MCF 10A (cell line): ENCODE measurements at regions of chr19 and their contacts with region 1.

Region 1: GRCh38 chr19:13774217-13775191 is at the start of gene C19orf53:
- DNase-seq: peak; percentile 94
- H3K4me3 Mint-ChIP-seq: peak within 1 kb of the TSS; percentile 98
- H3K27ac Mint-ChIP-seq: peak within 1 kb of the TSS; percentile 94
- H3K4me1 Mint-ChIP-seq: peaks cover 14% of the 10 kb centered on the region
- H3K27me3 Mint-ChIP-seq: no peaks in the 10 kb centered on the region
- CTCF ChIP-seq: no peak
- total RNA-seq, gene C19orf53: 89.0 and 101 TPM in 2 replicates

Region 2: DNA sequence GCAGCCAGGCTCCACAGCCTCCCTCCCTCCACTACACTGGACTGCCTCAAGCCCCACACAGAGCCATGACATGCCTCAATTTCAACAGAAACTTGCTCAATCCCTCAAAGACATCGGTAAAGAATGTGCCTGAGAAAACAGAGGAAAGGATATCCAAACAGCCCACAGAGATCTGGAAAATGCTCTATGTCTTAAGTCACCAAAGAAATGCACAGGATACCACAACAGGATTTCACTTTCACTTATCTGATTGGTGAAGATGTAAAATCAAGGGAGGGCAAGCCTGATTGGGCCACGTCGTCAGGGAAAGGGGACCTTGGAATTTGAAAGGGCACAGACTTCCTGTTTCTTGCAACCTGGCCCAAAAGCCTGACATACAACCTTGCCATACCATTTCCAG is 282.4 kb before region 1 on chr19:
- CTCF ChIA-PET with region 1: no interaction called
- POLR2A ChIA-PET with region 1: no interaction called
- intact Hi-C with region 1: no loop called
- DNase-seq: peak; percentile 2
- H3K4me3 Mint-ChIP-seq: no peak overlapping the region
- H3K27ac Mint-ChIP-seq: no peak overlapping the region
- H3K4me1 Mint-ChIP-seq: no peaks in the 10 kb centered on the region
- H3K27me3 Mint-ChIP-seq: peaks cover 48% of the 10 kb centered on the region
- CTCF ChIP-seq: no peak

Region 3: DNA sequence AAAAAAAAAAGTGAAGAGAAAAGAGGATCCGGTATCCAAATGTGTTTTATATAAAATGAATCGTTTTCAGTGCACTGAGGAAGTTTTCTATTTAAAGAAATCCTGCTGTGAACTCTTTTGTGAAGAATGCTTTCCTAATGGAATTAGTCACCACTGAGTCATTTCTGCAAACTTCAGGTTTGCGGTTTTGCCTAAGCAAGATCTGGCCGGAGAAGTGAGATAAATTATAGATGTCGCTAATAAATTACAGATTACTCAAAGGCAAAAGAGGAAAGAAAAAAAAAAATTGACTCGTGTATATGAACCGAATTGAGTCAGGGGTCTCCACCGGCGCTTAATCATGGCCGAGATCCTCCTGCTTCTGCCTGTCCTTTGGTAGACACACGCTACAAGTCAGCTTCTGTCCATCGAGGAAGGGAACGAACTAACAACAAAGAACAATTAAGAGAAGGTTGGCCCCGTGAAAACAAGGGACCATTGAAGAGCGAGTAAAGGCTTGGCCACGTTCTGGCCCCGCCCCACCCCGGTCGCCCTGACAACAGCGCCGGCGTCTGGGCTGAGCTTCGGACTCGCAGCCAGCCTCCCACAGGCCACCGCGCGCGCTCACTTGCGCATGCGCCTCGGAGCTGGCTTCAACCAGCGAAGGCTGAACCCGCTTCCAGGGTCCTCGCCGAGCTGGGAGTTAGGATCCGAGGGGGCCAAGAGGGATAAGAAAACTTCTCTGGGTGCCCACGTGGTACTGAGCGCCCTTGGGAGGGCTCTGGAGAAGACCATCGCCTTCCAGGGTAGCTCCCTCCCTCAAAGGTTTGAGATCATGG is 43.1 kb before region 1 on chr19:
- CTCF ChIA-PET with region 1: no interaction called
- POLR2A ChIA-PET with region 1: interaction called, 15 read pairs
- intact Hi-C with region 1: no loop called
- DNase-seq: peak; percentile 95
- H3K4me3 Mint-ChIP-seq: peak overlapping the region; percentile 79
- H3K27ac Mint-ChIP-seq: peak overlapping the region; percentile 99
- H3K4me1 Mint-ChIP-seq: peaks cover 18% of the 10 kb centered on the region
- H3K27me3 Mint-ChIP-seq: no peaks in the 10 kb centered on the region
- CTCF ChIP-seq: no peak

Region 4: GRCh38 chr19:13764101-13764807 is 10.2 kb before region 1 on chr19 and contains the start of gene MRI1:
- CTCF ChIA-PET with region 1: interaction called, 3 read pairs
- POLR2A ChIA-PET with region 1: interaction called, 51 read pairs
- intact Hi-C with region 1: no loop called
- DNase-seq: peak; percentile 69
- H3K4me3 Mint-ChIP-seq: peak within 1 kb of the TSS; percentile 81
- H3K27ac Mint-ChIP-seq: peak within 1 kb of the TSS; percentile 81
- H3K4me1 Mint-ChIP-seq: peaks cover 17% of the 10 kb centered on the region
- H3K27me3 Mint-ChIP-seq: no peaks in the 10 kb centered on the region
- CTCF ChIP-seq: no peak
- total RNA-seq, gene MRI1: 24.8 and 27.0 TPM in 2 replicates

Region 5: GRCh38 chr19:13794757-13795589 is 20.5 kb after region 1 on chr19 and contains the start of gene ZSWIM4:
- CTCF ChIA-PET with region 1: interaction called, 4 read pairs
- POLR2A ChIA-PET with region 1: interaction called, 32 read pairs
- intact Hi-C with region 1: no loop called
- DNase-seq: peak; percentile 100
- H3K4me3 Mint-ChIP-seq: peak within 1 kb of the TSS; percentile 95
- H3K27ac Mint-ChIP-seq: peak within 1 kb of the TSS; percentile 93
- H3K4me1 Mint-ChIP-seq: peaks cover 22% of the 10 kb centered on the region
- H3K27me3 Mint-ChIP-seq: no peaks in the 10 kb centered on the region
- CTCF ChIP-seq: no peak
- total RNA-seq, gene ZSWIM4: 9.2 and 9.4 TPM in 2 replicates